PC-9 (cell line): ENCODE measurements at regions of chr5 and their contacts with region 1.

Region 1: DNA sequence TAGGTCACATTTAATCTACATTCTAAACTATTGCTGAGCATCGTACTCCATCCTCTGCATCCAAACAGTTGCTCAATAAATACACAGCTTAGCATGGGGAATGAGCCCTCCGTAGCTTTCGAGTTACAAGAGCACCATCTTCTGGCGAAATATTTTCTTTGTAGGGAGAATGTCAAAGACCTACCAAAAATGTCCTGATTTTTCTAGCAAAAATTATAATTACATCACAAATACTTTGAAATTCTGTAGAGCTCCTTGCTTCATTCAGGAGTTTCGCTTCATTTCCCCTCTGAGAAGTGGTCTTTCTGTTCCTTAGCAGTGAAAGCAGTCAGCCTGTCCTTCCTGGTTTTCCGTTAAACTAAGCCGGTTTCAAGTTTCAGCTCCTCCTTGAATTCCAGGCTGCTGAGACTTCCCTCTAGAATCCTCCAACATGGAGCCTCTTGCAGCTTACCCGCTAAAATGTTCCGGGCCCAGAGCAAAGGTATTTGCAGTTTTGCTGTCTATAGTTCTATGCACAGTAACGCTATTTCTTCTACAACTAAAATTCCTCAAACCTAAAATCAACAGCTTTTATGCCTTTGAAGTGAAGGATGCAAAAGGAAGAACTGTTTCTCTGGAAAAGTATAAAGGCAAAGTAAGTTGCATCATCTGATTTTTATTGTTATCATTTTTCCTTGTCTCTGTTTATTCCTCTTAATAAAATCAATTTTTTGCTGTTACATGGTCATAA is at the start of gene GPX8:
- DNase-seq: peak; percentile 31 to 79
- H3K4me3 ChIP-seq: peak within 1 kb of the TSS; percentile 68
- H3K27ac ChIP-seq: peak within 1 kb of the TSS; percentile 53
- H3K4me1 ChIP-seq: peaks cover 7% of the 10 kb centered on the region
- H3K27me3 ChIP-seq: no peaks in the 10 kb centered on the region
- CTCF ChIP-seq: peak; percentile 88
- total RNA-seq, gene GPX8: 24.6 and 40.2 TPM in 2 replicates

Region 2: GRCh38 chr5:54944364-54944763 is 215.6 kb before region 1 on chr5:
- CTCF ChIA-PET with region 1: interaction called, 10 read pairs
- POLR2A ChIA-PET with region 1: no interaction called
- intact Hi-C with region 1: no loop called
- DNase-seq: no peak
- H3K4me3 ChIP-seq: no peak overlapping the region
- H3K27ac ChIP-seq: no peak overlapping the region
- H3K4me1 ChIP-seq: no peaks in the 10 kb centered on the region
- H3K27me3 ChIP-seq: no peaks in the 10 kb centered on the region; the same call in 1 of the 2 replicates
- CTCF ChIP-seq: peak; percentile 76

Region 3: DNA sequence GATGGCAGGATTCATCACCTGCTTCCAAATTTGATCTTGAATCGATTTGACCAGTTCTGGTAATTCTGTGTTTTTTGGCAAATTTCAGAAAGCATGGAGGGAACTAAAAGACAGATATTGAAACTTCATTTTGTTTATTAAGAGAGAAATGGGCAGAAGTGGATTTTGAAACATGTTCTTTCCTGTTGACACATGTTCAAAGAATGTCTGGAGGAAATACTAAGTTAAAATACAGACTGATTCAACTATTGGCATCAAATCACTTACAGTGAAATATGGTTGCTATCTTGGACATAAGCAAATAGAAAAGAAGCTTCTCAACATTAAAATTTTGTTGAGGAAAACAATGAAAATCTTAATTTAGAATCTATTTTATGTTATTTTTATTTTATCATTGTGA is 155.2 kb before region 1 on chr5:
- CTCF ChIA-PET with region 1: no interaction called
- POLR2A ChIA-PET with region 1: no interaction called
- intact Hi-C with region 1: no loop called
- DNase-seq: no peak
- H3K4me3 ChIP-seq: no peak overlapping the region
- H3K27ac ChIP-seq: no peak overlapping the region
- H3K4me1 ChIP-seq: no peaks in the 10 kb centered on the region
- H3K27me3 ChIP-seq: peaks cover 2% of the 10 kb centered on the region; the same call in 1 of the 2 replicates
- CTCF ChIP-seq: no peak